Activated B cell treated with CpG ODN at 0.5 μM for 24 hours (primary cell): ENCODE measurements at regions of chr17 and their contacts with region 1.

Region 1: DNA sequence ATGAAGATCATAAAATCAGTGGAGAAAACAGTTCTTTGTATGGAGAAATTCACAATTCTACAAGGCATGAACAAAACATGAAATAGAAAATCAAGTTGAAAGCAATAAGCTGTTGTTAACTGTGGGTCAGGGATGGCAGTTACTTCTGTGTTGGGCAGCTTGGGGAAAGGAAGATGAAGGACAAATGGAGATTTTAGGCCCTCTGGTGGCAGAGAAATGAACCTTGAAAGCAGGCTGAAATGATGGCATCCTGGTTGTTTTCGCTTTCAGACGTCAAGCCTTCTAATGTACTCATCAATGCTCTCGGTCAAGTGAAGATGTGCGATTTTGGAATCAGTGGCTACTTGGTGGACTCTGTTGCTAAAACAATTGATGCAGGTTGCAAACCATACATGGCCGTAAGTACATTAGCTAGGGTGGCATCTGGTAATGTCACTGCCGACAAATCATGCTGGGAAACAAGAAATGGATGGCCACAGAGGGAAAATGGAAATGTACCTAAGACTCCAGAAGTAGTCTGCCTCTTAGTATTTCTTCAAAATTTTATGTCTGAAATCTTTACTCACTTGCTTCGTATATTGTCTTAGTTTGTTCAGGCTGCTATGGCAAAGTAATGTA is 108.9 kb downstream of the MAP2K6 start:
- DNase-seq: no peak
- ATAC-seq: peak; percentile 45
- H3K4me3 Mint-ChIP-seq: no peak overlapping the region
- H3K27ac Mint-ChIP-seq: no peak overlapping the region
- H3K4me1 Mint-ChIP-seq: peaks cover 8% of the 10 kb centered on the region
- H3K27me3 Mint-ChIP-seq: peaks cover 17% of the 10 kb centered on the region
- CTCF ChIP-seq: no peak

Region 2: GRCh38 chr17:68771867-68772515 is 751.4 kb before region 1 on chr17:
- CTCF ChIA-PET with region 1: interaction called, 3 read pairs
- POLR2A ChIA-PET with region 1: no interaction called
- intact Hi-C with region 1: loop called (anchors 5 kb)
- DNase-seq: no peak
- ATAC-seq: peak; percentile 79
- H3K4me3 Mint-ChIP-seq: peak overlapping the region; percentile 70
- H3K27ac Mint-ChIP-seq: peak overlapping the region; percentile 69
- H3K4me1 Mint-ChIP-seq: peaks cover 20% of the 10 kb centered on the region
- H3K27me3 Mint-ChIP-seq: no peaks in the 10 kb centered on the region
- CTCF ChIP-seq: peak; percentile 17

Region 3: GRCh38 chr17:69320210-69320907 is 203.0 kb before region 1 on chr17:
- CTCF ChIA-PET with region 1: no interaction called
- POLR2A ChIA-PET with region 1: no interaction called
- intact Hi-C with region 1: no loop called
- DNase-seq: no peak
- ATAC-seq: no peak
- H3K4me3 Mint-ChIP-seq: no peak overlapping the region
- H3K27ac Mint-ChIP-seq: no peak overlapping the region
- H3K4me1 Mint-ChIP-seq: peaks cover 8% of the 10 kb centered on the region
- H3K27me3 Mint-ChIP-seq: no peaks in the 10 kb centered on the region
- CTCF ChIP-seq: no peak

Region 4: DNA sequence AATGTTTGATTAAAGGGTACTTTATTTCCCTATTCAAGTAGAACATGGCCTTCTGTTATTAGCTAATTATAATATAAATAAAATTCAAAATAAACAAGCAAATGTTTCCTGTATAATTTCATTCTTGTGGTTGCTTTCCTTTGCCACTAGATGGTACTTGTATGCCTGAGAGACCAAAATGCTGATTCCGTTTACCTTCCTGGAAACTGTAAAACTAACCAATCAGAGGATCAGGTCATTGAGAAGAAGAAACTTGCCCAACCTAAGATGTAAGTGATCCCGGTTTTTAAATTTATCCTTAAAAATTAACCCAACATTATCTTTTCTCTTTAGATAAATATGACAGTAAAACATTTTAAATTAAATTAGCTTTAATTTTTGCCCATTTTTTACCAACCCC is 188.3 kb before region 1 on chr17:
- CTCF ChIA-PET with region 1: interaction called, 38 read pairs
- POLR2A ChIA-PET with region 1: no interaction called
- intact Hi-C with region 1: no loop called
- DNase-seq: no peak
- ATAC-seq: no peak
- H3K4me3 Mint-ChIP-seq: no peak overlapping the region
- H3K27ac Mint-ChIP-seq: no peak overlapping the region
- H3K4me1 Mint-ChIP-seq: no peaks in the 10 kb centered on the region
- H3K27me3 Mint-ChIP-seq: peaks cover 13% of the 10 kb centered on the region
- CTCF ChIP-seq: no peak

Region 5: DNA sequence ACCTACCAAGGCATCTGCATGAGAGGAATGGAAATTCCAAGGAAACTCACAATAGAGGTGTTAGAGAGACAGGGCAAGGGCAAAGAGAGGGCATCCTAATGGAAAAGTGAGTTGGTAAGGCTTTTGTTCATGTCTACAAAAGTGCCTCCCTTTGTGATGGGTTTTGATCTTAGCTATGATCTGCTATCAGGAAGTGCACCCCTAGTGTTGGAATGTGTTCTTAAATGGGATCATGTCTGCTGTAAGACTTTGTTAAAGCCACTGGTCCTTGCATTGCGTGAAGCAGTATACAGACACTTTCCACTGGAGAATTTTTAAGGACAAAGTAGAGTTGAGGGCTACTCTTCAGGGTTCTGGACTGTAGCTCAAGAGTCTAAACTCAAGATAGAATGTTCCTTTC is 16.9 kb before region 1 on chr17:
- CTCF ChIA-PET with region 1: interaction called, 22 read pairs
- POLR2A ChIA-PET with region 1: interaction called, 4 read pairs
- intact Hi-C with region 1: loop called (anchors 1 kb)
- DNase-seq: no peak
- ATAC-seq: no peak
- H3K4me3 Mint-ChIP-seq: no peak overlapping the region
- H3K27ac Mint-ChIP-seq: no peak overlapping the region
- H3K4me1 Mint-ChIP-seq: peaks cover 44% of the 10 kb centered on the region
- H3K27me3 Mint-ChIP-seq: no peaks in the 10 kb centered on the region
- CTCF ChIP-seq: no peak

Region 6: DNA sequence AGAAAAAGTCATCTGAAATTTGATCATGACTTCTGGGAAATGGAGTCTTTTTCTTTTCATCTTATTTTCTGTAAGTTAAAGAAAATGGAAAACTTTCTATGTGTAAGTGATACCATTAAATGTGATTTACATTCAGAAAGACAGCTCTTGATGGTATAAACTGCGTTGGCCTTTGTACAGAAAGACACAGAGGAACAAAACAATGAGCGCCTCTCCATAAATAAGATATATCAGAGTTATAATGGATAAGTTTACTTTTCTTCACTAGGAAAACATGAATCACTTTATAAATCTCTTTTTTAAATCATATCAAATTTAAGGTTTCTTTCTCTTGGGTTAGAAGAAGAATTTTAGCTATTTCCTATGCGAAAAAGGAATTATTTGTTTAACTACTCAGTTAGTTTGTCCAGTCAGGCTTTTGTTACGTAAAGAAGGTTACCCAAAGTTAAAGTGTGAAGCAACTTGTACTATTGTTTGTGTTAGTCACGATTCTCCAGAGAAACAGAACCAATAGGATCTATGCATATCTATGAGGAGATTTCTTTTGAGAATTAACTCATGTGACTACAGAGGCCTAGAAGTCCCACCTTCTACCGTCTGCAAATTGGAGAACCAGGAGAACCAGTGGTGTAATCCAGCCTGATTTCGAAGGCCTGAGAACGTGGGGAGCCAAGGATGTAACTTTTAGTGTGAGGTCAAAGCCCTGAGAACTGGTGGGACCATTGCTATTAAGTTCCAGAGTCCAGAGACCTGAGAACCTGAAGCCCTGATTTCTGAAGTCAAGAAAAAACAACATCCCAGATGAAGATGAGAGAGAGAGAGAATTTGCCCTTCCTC is 256.2 kb after region 1 on chr17:
- CTCF ChIA-PET with region 1: no interaction called
- POLR2A ChIA-PET with region 1: no interaction called
- intact Hi-C with region 1: no loop called
- DNase-seq: no peak
- ATAC-seq: no peak
- H3K4me3 Mint-ChIP-seq: no peak overlapping the region
- H3K27ac Mint-ChIP-seq: no peak overlapping the region
- H3K4me1 Mint-ChIP-seq: no peaks in the 10 kb centered on the region
- H3K27me3 Mint-ChIP-seq: no peaks in the 10 kb centered on the region
- CTCF ChIP-seq: no peak

Region 7: DNA sequence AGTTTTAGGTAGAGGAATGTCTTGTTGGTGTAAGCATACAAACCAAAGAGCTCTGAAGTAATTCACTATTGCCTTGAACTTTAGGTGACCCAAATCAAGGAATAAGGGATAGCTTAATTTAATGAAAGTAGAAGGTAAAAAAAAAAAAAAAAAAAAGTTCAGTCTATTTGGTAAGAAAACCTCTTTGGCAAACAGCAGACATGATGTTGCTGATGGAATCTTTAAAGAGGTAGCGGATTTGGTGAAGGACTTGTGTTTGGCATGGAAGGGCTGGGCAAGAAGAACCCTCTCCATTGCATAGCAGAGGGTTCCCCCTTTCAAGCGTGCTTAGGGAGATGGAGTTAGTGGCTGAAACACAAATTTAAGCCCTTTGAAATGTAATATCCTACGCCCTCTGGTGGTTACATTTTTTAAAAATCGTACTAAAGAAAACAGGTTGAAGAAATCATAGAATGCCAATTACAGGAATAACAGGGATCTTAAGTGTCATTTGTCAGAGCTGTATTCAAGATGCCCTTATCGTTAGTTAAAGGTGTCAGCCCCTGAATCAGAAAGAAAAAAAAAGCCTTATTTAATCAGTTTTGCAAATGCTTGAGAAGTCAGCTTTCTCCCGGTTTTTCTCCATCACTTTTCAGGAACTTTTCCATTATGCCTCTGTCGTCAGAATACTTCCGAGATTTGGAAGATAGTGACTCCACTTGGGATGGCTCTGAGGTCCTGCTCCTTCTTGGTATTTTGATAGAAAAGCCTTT is 1029.1 kb after region 1 on chr17:
- CTCF ChIA-PET with region 1: interaction called, 13 read pairs
- POLR2A ChIA-PET with region 1: no interaction called
- intact Hi-C with region 1: no loop called
- DNase-seq: no peak
- ATAC-seq: no peak
- H3K4me3 Mint-ChIP-seq: no peak overlapping the region
- H3K27ac Mint-ChIP-seq: no peak overlapping the region
- H3K4me1 Mint-ChIP-seq: no peaks in the 10 kb centered on the region
- H3K27me3 Mint-ChIP-seq: no peaks in the 10 kb centered on the region
- CTCF ChIP-seq: no peak